Activated CD4-positive, alpha-beta T cell treated with anti-CD3 and anti-CD28 coated beads for 36 hours (primary cell): ENCODE measurements at regions of chr2 and their contacts with region 1.

Region 1: DNA sequence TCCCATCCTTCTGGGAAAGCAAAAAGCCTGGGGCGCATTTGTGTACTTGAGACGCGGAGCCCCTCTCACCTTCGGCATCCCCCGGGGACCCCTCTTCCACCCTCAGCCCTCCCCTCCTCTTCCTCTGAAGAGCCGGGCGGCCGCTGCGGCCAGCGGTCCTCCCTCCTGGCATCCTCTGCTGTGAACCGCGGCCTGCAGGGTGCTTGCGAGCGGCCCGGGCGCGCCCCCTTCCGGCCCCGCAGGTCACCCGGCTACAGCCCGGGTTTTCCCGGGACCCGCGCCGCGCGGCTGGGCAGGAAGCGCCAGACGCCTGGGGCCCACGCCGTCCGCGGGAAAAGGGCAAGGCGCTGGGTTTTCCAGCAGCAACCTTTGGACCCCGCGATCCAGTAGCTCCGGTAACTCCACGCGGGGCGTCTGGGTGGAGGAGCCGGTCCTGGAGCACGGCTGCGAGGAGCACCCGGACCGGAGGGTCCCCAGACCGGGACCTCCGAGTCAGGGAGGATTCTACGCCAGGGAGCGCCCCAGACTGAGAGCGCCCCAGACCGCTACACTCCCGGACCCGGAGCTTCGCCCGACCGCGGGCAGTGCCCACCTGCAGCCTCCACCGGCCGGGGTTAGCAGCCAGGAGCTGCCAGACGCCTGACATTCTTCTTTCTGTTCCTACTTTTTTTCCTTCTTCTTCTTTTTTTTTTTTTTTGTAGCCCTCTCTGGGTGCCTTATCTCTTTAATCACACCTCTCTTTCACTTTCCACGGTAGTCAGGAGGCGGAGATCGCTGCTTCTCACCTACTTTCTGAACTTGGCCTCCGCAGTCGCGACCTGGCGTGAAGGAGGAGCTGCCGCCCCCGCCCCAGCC is at the start of gene IL18R1:
- DNase-seq: peak; percentile 85
- ATAC-seq: peak; percentile 86
- H3K4me3 Mint-ChIP-seq: peak within 1 kb of the TSS; percentile 100
- H3K27ac Mint-ChIP-seq: peak within 1 kb of the TSS; percentile 99
- H3K4me1 Mint-ChIP-seq: peaks cover 36% of the 10 kb centered on the region
- H3K27me3 Mint-ChIP-seq: no peaks in the 10 kb centered on the region
- total RNA-seq, gene IL18R1: 22.4 to 23.4 TPM

Region 2: DNA sequence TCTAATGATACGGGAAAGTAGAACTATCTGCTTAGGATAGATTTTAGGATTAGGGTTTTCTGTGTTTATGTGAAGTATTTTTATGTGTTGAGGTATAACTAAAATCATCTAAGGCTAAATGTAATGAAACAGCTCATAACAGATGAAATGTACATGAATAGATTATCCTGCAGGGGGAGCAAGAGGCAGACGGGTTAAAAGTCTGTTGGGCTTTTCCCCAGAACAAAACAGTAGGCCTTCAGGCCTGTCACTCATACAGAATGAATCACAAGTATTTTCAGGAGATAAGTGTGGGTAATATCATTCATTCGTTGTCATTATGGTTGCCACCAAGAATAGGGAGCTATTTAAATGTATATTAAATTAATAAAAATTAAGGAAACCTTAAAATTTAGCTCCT is 471.9 kb before region 1 on chr2:
- CTCF ChIA-PET with region 1: interaction called, 3 read pairs
- POLR2A ChIA-PET with region 1: no interaction called
- intact Hi-C with region 1: loop called (anchors 5 kb)
- DNase-seq: peak; percentile 67
- ATAC-seq: peak; percentile 90
- H3K4me3 Mint-ChIP-seq: no peak overlapping the region
- H3K27ac Mint-ChIP-seq: peak overlapping the region; percentile 12
- H3K4me1 Mint-ChIP-seq: peaks cover 18% of the 10 kb centered on the region
- H3K27me3 Mint-ChIP-seq: no peaks in the 10 kb centered on the region

Region 3: DNA sequence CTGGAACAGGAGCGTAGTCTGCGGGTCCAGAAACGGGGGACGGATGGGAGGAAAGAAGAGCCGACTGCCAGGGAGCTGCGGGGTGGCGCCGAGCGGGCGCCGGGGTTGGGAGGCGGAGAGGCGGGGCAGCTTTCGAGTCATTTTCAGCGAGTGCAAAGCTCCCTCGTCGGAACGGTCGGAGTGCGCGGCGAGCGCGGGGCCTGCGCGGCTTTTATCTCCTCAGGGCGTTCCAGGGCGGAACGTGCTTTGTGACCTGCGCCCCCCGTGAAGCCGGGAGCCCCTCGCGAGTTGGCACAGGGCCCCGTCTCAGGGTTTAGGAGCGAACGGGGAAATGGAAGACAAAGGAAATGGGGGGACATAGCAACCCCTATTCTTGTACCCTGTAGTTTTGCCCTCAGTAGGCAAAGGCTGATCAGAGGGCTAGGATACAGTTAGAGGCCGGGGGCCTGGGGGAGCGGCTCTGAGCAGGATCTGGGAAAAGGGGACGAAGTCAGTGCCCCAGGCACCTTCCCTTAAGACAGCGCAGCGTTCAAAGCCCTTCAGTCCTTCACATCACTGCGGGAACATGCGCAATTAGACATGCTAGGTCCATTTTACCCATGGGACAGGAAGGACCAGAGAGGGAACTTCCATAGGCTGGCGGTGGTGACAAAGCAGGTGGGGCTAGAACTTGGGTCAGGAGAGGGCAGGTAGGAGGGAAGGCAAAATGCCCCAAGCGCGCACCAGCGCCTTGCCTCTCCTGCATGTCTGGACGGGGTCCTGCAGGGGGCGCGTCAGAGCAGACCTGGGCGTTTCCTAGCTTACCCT is 104.5 kb before region 1 on chr2:
- CTCF ChIA-PET with region 1: interaction called, 6 read pairs
- POLR2A ChIA-PET with region 1: no interaction called
- intact Hi-C with region 1: loop called (anchors 1 to 2 kb)
- DNase-seq: peak; percentile 85
- ATAC-seq: peak; percentile 68
- H3K4me3 Mint-ChIP-seq: peak overlapping the region; percentile 73
- H3K27ac Mint-ChIP-seq: peak overlapping the region; percentile 76
- H3K4me1 Mint-ChIP-seq: peaks cover 38% of the 10 kb centered on the region
- H3K27me3 Mint-ChIP-seq: no peaks in the 10 kb centered on the region

Region 4: DNA sequence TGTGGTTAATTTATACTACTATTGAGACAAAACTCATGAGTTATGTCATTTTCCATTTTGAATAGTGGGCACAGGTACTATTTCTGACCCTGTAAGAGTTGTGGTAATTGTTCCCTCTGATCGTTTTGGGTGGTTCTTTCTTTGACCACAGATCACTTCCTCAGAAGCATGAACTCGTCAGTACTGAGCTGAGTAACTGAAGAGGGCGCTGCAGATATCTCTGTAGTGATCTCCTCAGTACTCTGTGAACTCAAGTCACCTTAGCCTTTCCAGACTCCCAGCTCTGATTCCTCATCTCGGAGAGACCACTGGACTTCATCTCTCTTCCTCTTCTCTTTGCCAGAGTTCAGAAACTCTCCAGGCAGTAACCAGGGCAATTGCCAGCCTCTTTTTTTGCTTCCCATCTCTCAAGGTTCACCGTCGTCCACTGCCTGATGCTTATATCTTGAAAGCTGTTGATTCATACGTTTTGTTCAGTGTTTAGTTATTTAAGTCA is 53.8 kb before region 1 on chr2:
- CTCF ChIA-PET with region 1: interaction called, 4 read pairs
- POLR2A ChIA-PET with region 1: no interaction called
- intact Hi-C with region 1: loop called (anchors 2 kb)
- DNase-seq: peak; percentile 66
- ATAC-seq: peak; percentile 88
- H3K4me3 Mint-ChIP-seq: peak overlapping the region; percentile 17
- H3K27ac Mint-ChIP-seq: peak overlapping the region; percentile 58
- H3K4me1 Mint-ChIP-seq: peaks cover 46% of the 10 kb centered on the region
- H3K27me3 Mint-ChIP-seq: peaks cover 3% of the 10 kb centered on the region

Region 5: DNA sequence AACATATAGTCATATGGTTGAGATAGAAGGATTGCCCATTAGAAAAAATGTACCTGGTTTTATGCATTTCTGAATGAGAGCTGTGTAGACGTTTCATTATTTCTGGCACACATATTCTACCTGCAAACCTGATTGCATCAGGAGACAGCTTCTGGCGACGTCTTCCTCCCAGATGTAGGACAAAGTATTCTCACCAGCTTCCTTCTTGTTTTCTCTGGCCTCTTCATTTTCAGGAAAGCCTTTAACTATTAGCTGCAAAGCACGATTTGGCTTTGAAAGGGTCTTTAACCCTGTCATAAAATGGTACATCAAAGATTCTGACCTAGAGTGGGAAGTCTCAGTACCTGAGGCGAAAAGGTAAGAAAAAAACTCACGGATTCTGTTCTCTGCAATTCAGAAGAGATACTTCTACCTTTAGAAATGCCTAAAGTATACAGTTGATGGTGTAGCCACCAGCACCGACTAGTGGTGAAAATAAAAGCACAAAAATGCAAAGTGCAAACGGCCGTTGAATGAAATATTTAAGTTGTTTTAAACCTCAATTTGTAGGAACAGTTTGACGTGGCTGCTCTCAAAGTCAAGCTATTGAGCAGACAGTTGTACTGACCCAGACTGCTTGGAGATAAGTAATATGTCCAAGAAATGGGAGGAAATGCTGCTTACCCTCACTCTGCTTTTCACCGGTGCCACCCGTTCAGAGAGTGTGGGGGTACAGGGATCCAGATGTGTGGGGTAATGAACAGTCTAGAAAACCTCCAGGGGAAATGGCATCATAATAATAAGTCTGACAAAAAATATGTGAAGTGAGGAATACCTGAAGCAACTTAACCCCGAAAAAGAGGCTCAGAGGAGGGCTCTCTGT is 87.4 kb after region 1 on chr2:
- CTCF ChIA-PET with region 1: interaction called, 13 read pairs
- POLR2A ChIA-PET with region 1: no interaction called
- intact Hi-C with region 1: loop called (anchors 1 to 2 kb)
- DNase-seq: peak; percentile 65
- ATAC-seq: peak; percentile 84
- H3K4me3 Mint-ChIP-seq: no peak overlapping the region
- H3K27ac Mint-ChIP-seq: peak overlapping the region; percentile 56
- H3K4me1 Mint-ChIP-seq: peaks cover 11% of the 10 kb centered on the region
- H3K27me3 Mint-ChIP-seq: no peaks in the 10 kb centered on the region

Region 6: GRCh38 chr2:102538491-102538890 is 182.7 kb after region 1 on chr2:
- CTCF ChIA-PET with region 1: no interaction called
- POLR2A ChIA-PET with region 1: no interaction called
- intact Hi-C with region 1: no loop called
- DNase-seq: no peak
- ATAC-seq: no peak
- H3K4me3 Mint-ChIP-seq: no peak overlapping the region
- H3K27ac Mint-ChIP-seq: no peak overlapping the region
- H3K4me1 Mint-ChIP-seq: no peaks in the 10 kb centered on the region
- H3K27me3 Mint-ChIP-seq: peaks cover 9% of the 10 kb centered on the region